Thyroid gland (tissue), 4 donors: ENCODE measurements at regions of chr19 and their contacts with region 1.

Region 1: DNA sequence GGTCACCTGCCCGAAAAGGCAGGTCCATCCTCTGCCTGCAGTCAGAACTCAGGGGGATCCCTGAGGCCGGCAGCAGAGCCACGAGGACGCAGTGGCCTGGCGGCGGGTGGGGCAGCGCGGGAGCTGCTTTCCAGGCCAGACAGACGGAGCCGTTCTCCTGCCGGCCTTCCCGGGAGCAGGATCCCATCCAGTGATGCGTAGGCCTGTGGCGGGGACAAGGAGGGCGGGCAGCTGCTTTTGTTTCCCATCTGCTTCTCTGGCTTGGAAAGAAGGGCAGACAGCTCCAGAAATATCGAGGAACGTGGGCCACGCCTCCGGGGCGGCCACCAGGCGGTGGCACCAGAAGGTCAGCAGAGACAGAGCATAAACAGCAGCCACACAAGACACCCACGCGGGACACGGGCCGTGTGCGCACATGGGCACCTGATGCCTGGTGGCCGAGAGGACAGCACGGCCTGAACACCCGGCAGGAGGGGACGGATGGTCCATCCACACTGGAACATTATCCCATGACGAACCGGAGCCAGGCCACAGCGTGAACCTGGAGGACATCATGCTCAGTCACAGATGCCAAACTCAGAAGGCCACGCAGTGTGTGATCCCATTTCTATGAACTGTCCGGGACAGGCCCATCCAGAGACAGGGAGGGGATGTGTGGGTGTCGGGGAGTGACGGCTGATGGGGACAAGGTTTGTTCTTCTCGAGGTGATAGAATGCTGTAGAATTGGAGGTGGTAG is 13.9 kb upstream of the MKNK2 start:
- DNase-seq: no peak
- H3K4me3 ChIP-seq: no peak overlapping the region
- H3K27ac ChIP-seq: peak overlapping the region in 2 of 3 donors; percentile 20 to 57
- H3K4me1 ChIP-seq: peaks cover 20 to 23% of the 10 kb centered on the region in 2 donors
- H3K27me3 ChIP-seq: no peaks in the 10 kb centered on the region
- CTCF ChIP-seq: no peak
- POLR2A ChIP-seq: no peak

Region 2: GRCh38 chr19:1929021-1929742 is 135.8 kb before region 1 on chr19:
- intact Hi-C with region 1: loop called (anchors 5 kb)
- DNase-seq: peak; percentile 79 to 80
- H3K4me3 ChIP-seq: no peak overlapping the region
- H3K27ac ChIP-seq: no peak overlapping the region
- H3K4me1 ChIP-seq: peaks cover 5 to 10% of the 10 kb centered on the region in 2 donors
- H3K27me3 ChIP-seq: no peaks in the 10 kb centered on the region
- CTCF ChIP-seq: peak; percentile 69 to 94 (median 80)
- POLR2A ChIP-seq: no peak